ENCODE measurements at regions of chr7 and their contacts with region 1.

Region 1: DNA sequence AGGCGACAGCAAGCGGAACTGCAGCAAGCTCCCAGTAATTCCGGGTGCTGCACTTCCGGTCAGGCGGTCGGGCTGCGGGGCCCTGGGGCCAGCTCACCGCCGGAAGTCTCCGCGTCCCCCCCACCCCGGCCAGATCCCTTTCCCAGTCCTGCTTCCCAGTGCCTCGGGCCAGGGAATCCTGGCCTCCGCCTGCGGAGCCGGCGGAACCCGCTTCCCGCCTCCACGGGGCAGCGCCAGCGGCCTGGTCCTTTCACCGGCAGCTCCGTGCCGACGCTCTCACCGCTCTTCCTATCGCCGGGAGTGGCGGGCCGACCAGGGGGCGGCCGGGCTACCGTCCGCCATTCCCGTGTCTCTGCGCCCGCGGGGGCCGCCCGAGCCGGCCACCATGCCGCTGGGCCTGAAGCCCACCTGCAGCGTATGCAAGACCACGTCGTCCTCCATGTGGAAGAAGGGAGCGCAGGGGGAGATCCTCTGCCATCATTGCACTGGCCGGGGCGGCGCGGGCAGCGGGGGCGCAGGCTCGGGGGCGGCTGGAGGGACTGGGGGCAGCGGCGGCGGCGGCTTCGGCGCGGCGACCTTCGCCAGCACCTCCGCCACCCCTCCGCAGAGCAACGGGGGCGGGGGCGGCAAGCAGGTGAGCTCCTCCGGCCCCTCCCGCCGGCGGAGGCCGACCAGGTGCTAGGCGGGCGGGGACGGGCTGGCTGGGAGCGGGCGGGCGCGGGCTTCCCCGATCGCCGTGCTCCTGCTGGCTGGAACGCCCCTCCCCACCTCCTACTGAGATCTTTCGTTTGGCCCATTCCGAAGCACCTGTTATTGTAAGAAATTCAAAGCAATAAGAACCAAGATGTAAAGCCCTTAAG is at the start of gene GATAD1:
- DNase-seq: peak; percentile 85 to 90
- H3K4me3 ChIP-seq: peak within 1 kb of the TSS; percentile 67 to 94 (median 89)
- H3K27ac ChIP-seq: peak within 1 kb of the TSS; percentile 95
- H3K4me1 ChIP-seq: no peaks in the 10 kb centered on the region
- H3K27me3 ChIP-seq: no peaks in the 10 kb centered on the region
- CTCF ChIP-seq: peak; percentile 87 to 93 (median 87); a peak in 3 of 4 replicates
- EP300 ChIP-seq: no peak
- POLR2A ChIP-seq: peak; percentile 76 to 89
- RAD21 ChIP-seq: peak in 1 of 2 experiments; percentile 93; a peak in 1 of 4 replicates
- total RNA-seq, gene GATAD1: 31.6 and 34.7 TPM in 2 replicates

Region 2: DNA sequence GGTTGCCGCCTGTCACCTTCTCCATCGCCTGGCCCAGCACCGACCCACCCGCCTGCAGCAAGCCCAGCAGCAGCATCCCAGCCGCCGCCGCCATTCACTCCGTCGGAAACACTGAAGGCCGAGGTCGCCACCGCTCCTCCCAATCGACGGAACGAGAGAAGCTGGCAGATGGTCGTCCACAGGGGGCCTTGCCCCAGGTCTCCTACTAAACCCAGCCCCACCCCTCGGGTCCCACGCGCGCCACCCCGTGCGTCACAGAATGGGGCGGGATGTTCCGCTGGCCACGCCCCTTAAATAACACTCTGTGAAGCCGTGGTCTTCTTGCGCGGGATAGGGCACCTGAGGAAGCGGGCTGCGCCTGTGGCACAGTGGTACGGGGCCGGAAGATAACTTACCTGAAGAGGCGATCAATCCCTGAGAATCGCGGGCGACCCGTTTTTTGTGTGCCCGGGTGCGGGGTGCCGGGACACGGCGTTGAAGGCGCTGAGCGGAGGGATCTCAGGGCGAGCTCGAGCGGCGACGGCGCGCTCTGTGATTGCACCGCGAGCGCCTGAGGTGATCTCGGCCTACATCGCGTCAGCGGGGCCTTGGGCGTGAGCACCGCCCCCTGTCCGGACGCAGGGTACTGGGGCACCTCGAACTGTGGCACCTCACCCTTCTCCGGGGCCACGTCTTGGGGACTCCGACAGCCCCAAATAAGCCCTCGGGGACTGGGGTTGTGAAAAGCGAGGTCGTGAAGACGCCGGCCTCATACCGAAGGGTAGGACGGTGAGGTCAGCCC is 313.1 kb before region 1 on chr7 and contains the start of gene CYP51A1:
- CTCF ChIA-PET with region 1: interaction called, 10 read pairs
- POLR2A ChIA-PET with region 1: interaction called, 10 read pairs
- DNase-seq: peak; percentile 60 to 97
- H3K4me3 ChIP-seq: peak within 1 kb of the TSS; percentile 74 to 97 (median 89)
- H3K27ac ChIP-seq: peak within 1 kb of the TSS; percentile 94
- H3K4me1 ChIP-seq: peaks cover 0 to 6% (median 0%) of the 10 kb centered on the region in 4 experiments; a peak in 4 of 7 replicates
- H3K27me3 ChIP-seq: no peaks in the 10 kb centered on the region
- CTCF ChIP-seq: peak in 2 of 3 experiments; percentile 13 to 22; a peak in 2 of 4 replicates
- EP300 ChIP-seq: peak in 1 of 2 experiments; percentile 34; a peak in 1 of 3 replicates
- POLR2A ChIP-seq: peak; percentile 85 to 94
- RAD21 ChIP-seq: no peak
- total RNA-seq, gene CYP51A1: 109 and 111 TPM in 2 replicates

Region 3: DNA sequence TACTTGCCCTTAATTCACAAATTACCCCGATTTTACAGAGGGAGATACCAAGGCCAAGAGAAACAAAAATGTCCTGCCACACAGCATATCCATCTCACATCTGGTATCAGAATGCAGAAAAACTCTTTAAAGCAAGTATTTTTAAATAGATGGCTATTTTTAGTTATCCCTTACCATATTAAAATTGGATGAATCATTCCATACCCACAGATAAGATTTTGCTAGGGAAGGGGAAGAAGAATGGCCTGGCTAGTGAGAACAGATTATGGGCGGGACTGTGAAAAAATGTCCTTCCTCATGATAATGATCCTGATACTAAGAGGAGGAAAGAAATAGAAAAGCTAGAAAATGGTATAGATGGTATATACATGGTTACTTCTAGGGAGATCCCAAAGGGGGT is 80.8 kb before region 1 on chr7:
- CTCF ChIA-PET with region 1: no interaction called
- POLR2A ChIA-PET with region 1: no interaction called
- DNase-seq: no peak
- H3K4me3 ChIP-seq: no peak overlapping the region
- H3K27ac ChIP-seq: no peak overlapping the region
- H3K4me1 ChIP-seq: no peaks in the 10 kb centered on the region
- H3K27me3 ChIP-seq: no peaks in the 10 kb centered on the region
- CTCF ChIP-seq: no peak
- EP300 ChIP-seq: no peak
- POLR2A ChIP-seq: no peak
- RAD21 ChIP-seq: no peak

Region 4: DNA sequence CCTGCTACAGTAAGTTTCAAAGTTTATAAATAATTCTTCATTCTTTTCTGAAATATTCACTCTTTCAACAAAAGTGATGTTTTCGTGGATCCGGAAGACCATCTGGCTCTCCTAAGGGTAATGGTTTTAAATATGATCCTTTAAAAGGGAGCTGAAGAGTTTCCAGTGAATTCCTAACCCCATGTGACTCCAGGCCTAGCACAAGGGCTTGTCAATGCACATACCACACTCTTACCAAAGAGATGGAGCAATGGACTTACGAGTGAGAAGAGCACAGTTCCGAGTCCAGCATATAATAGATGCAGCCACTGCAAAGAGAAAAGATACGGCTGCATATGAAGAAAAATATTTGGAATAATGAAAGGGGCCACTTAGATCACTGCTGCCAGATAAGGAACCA is 32.4 kb before region 1 on chr7:
- CTCF ChIA-PET with region 1: interaction called, 159 read pairs
- POLR2A ChIA-PET with region 1: interaction called, 5 read pairs
- DNase-seq: no peak
- H3K4me3 ChIP-seq: no peak overlapping the region
- H3K27ac ChIP-seq: no peak overlapping the region
- H3K4me1 ChIP-seq: no peaks in the 10 kb centered on the region
- H3K27me3 ChIP-seq: no peaks in the 10 kb centered on the region; a peak in 1 of 7 replicates
- CTCF ChIP-seq: no peak
- EP300 ChIP-seq: no peak
- POLR2A ChIP-seq: no peak
- RAD21 ChIP-seq: no peak

Region 5: DNA sequence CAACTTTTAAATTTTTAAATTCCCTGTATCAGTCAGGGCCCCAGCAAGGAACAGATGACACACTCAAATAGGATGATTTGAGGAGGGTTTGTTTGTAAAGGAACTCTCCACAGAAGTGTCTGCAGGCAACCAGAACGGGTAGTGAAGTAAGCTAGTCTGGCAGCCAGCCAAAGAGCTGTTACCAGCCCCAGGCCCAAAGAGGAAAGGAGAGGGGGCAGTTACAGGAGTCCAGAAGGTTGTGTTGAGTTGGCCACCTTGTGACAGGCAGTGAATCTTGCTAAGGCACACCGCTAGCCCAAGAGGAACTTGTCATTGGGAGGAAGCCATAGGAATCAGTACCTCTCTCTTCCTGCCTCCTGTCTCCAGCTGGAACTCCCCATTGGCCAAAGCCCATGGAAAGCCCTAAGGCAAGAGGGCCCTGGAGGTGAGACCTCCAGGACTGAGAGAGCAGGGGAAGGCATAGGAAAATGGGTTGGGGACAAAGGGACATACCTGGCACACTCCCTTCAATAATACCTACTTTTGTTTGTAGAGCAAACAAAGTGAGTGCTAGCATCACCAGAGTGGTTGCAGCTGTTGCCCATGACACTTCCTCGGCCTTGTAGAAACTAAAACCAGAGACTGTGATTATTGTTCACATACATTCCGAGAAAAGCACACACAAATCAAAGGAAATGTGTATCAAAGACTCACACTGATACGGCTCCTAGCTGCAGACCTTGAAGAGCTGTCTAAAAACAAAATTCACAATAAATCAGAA is 25.7 kb before region 1 on chr7:
- CTCF ChIA-PET with region 1: interaction called, 159 read pairs
- POLR2A ChIA-PET with region 1: interaction called, 34 read pairs
- DNase-seq: no peak
- H3K4me3 ChIP-seq: no peak overlapping the region
- H3K27ac ChIP-seq: no peak overlapping the region
- H3K4me1 ChIP-seq: peaks cover 0 to 3% (median 0%) of the 10 kb centered on the region in 4 experiments; a peak in 3 of 7 replicates
- H3K27me3 ChIP-seq: peaks cover 0 to 2% (median 0%) of the 10 kb centered on the region in 4 experiments; a peak in 2 of 7 replicates
- CTCF ChIP-seq: no peak
- EP300 ChIP-seq: no peak
- POLR2A ChIP-seq: no peak
- RAD21 ChIP-seq: no peak

Region 6: GRCh38 chr7:92436612-92437445 is 10.7 kb before region 1 on chr7:
- CTCF ChIA-PET with region 1: interaction called, 15 read pairs
- POLR2A ChIA-PET with region 1: interaction called, 13 read pairs
- DNase-seq: no peak
- H3K4me3 ChIP-seq: no peak overlapping the region; a peak in 1 of 8 replicates
- H3K27ac ChIP-seq: no peak overlapping the region
- H3K4me1 ChIP-seq: peaks cover 0 to 11% (median 5%) of the 10 kb centered on the region in 4 experiments; a peak in 4 of 7 replicates
- H3K27me3 ChIP-seq: no peaks in the 10 kb centered on the region
- CTCF ChIP-seq: no peak
- EP300 ChIP-seq: no peak
- POLR2A ChIP-seq: no peak
- RAD21 ChIP-seq: no peak

Region 7: DNA sequence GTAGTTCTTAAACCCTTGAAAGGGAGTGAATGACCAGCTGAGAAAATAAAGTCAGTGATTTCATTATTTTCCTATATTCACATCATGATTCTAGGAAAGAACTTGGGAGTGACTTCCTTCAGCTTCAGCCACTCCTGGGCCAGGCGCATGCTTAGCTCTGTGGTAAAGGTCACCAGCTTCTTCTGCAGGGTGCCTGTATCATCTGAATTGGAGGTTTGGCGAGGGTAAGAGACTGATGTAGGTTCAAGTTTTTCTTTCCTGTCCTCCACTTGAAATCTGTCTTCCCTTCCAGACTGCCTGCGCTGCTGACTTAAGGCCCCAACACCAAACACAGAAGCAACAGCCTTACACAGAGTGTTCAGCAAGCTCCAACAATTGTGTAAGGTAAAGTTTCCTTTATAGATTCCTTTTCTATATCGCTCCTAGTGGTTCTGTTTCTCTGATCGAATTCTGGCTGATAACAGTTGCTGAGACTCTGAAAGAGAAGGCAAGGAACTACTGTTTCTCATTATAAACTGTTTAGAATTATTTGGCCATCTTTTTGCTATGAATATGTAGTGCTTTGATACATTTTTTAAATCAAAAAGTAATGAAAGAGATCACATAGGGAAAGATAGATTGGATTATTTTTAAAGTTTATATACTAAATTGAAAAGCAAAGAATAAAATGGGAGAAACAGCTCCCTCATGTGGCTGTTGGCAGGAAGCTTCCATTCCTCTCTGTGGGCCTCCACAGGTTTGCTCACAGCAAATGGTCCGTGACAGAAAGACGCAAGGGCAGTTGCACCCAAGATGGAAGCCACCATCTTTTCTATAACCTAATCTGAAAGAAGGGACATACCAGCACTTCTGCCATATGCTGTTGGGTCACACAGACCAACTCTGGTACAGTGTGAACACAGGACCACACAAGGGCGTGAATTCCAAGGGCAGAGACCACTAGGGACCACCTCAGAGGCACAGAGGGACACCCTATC is 13.7 kb after region 1 on chr7:
- CTCF ChIA-PET with region 1: interaction called, 31 read pairs
- POLR2A ChIA-PET with region 1: interaction called, 21 read pairs
- DNase-seq: no peak
- H3K4me3 ChIP-seq: no peak overlapping the region
- H3K27ac ChIP-seq: no peak overlapping the region
- H3K4me1 ChIP-seq: no peaks in the 10 kb centered on the region
- H3K27me3 ChIP-seq: no peaks in the 10 kb centered on the region
- CTCF ChIP-seq: peak; percentile 54 to 72 (median 64)
- EP300 ChIP-seq: no peak
- POLR2A ChIP-seq: no peak
- RAD21 ChIP-seq: peak; percentile 68 to 70

Measured in H1 (cell line).